ENCODE measurements at regions of chr9 and their contacts with region 1.

Region 1: DNA sequence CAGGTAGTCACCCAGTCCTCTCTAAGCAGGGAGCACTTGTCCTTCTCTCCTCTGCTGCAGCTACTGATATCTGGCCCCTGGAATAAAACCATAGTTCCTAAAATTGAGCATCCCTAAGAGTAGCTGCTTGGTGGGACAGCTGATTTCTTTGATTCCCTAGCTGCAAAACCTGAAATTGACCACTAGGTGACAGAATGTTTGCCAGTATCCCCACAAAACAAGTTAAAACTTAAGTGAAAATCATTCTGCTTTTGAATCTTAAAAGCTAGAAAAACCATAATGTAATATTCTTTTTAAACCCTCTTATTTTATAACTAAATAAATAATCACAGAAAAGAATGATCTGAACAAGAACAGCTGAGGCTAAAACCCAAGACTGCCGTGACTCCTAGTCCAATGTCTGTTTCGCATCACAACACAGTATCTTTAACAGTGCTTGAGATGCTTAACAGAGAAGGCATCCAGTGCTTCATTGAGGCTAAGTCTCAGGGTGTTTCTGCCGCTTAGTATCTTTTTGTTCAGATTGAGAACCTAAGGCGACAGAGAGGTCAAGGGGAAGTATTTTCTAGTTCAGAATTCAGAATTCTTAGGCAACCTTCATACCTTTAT is 24.4 kb upstream of the TAL2 start:
- DNase-seq: no peak
- H3K4me3 Mint-ChIP-seq: no peak overlapping the region
- H3K27ac Mint-ChIP-seq: no peak overlapping the region
- H3K4me1 Mint-ChIP-seq: no peaks in the 10 kb centered on the region
- H3K27me3 Mint-ChIP-seq: no peaks in the 10 kb centered on the region
- CTCF ChIP-seq: peak; percentile 38

Region 2: GRCh38 chr9:104944356-104944755 is 693.5 kb before region 1 on chr9:
- CTCF ChIA-PET with region 1: no interaction called
- POLR2A ChIA-PET with region 1: no interaction called
- intact Hi-C with region 1: no loop called
- DNase-seq: no peak
- H3K4me3 Mint-ChIP-seq: no peak overlapping the region
- H3K27ac Mint-ChIP-seq: no peak overlapping the region
- H3K4me1 Mint-ChIP-seq: no peaks in the 10 kb centered on the region
- H3K27me3 Mint-ChIP-seq: no peaks in the 10 kb centered on the region
- CTCF ChIP-seq: no peak

Region 3: GRCh38 chr9:105026451-105026850 is 611.4 kb before region 1 on chr9:
- CTCF ChIA-PET with region 1: no interaction called
- POLR2A ChIA-PET with region 1: no interaction called
- intact Hi-C with region 1: no loop called
- DNase-seq: no peak
- H3K4me3 Mint-ChIP-seq: no peak overlapping the region
- H3K27ac Mint-ChIP-seq: no peak overlapping the region
- H3K4me1 Mint-ChIP-seq: no peaks in the 10 kb centered on the region
- H3K27me3 Mint-ChIP-seq: no peaks in the 10 kb centered on the region
- CTCF ChIP-seq: no peak

Region 4: GRCh38 chr9:105708405-105708804 is 70.5 kb after region 1 on chr9:
- CTCF ChIA-PET with region 1: interaction called, 12 read pairs
- POLR2A ChIA-PET with region 1: no interaction called
- intact Hi-C with region 1: no loop called
- DNase-seq: no peak
- H3K4me3 Mint-ChIP-seq: no peak overlapping the region
- H3K27ac Mint-ChIP-seq: peak overlapping the region; percentile 63
- H3K4me1 Mint-ChIP-seq: no peaks in the 10 kb centered on the region
- H3K27me3 Mint-ChIP-seq: no peaks in the 10 kb centered on the region
- CTCF ChIP-seq: no peak

Region 5: DNA sequence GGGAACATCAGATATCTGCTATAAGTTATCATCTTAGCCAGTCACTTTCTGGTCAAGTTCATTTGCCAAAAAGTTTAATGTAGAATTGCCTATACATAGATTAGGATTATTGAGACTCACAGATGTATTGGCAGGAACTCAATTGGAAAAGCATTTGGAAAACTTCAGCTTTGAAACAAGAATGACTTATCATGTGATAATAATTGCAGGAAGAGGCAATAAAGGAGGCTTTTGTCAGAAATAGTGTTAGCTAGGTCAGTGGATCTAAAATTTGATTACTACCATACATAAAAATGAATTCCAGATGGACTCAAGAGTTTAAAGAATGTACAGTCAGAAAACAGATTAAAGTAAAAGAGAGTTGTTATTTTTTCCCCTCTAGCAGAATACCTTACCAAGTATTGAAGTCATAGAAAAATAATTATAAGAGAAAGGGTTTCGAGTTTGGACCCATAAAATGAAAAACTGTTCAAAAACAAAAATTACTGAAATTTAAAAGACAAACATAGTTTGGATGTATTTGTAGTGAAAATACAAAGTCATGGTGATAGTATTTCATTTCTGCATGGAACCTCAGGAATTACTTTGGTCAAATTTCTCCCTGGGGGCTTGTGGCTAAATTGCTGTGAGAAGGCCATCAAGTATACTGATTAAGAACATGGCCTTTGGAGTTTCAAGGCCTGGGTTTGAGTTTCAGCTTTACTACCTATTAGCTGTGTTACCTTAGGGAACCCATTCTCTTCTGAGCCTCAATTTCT is 216.3 kb after region 1 on chr9:
- CTCF ChIA-PET with region 1: no interaction called
- POLR2A ChIA-PET with region 1: no interaction called
- intact Hi-C with region 1: no loop called
- DNase-seq: no peak
- H3K4me3 Mint-ChIP-seq: no peak overlapping the region
- H3K27ac Mint-ChIP-seq: no peak overlapping the region
- H3K4me1 Mint-ChIP-seq: peaks cover 5% of the 10 kb centered on the region
- H3K27me3 Mint-ChIP-seq: no peaks in the 10 kb centered on the region
- CTCF ChIP-seq: no peak

Region 6: DNA sequence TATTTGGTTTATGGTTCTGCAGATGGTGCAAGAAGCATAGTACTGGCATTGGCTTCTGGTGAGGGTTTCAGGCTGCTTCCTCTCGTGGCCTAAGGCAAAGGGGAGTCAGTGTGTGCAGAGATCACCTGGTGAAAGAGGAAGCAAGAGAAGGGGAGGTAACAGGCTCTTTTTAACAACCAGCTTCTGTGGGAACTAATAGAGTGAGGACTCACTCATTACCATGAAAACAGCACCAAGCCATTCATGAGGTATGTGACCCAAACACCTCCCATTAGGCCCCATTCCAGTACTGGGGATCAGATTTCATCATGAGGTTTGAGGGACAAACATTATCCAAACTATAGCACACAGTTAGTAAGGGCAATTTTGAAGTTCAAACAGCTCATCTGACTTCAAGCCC is 319.9 kb after region 1 on chr9:
- CTCF ChIA-PET with region 1: no interaction called
- POLR2A ChIA-PET with region 1: no interaction called
- intact Hi-C with region 1: no loop called
- DNase-seq: peak; percentile 54
- H3K4me3 Mint-ChIP-seq: no peak overlapping the region
- H3K27ac Mint-ChIP-seq: no peak overlapping the region
- H3K4me1 Mint-ChIP-seq: no peaks in the 10 kb centered on the region
- H3K27me3 Mint-ChIP-seq: no peaks in the 10 kb centered on the region
- CTCF ChIP-seq: no peak

Measured in MCF 10A (cell line).